ENCODE measurements at regions of chr12 and their contacts with region 1.

Region 1: GRCh38 chr12:42023733-42024494 is 120.8 kb downstream of the GXYLT1 start:
- DNase-seq: peak; percentile 24
- H3K4me3 ChIP-seq: peak overlapping the region; percentile 56
- H3K27ac ChIP-seq: no peak overlapping the region
- H3K27me3 ChIP-seq: no peaks in the 10 kb centered on the region
- CTCF ChIP-seq: peak; percentile 98

Region 2: DNA sequence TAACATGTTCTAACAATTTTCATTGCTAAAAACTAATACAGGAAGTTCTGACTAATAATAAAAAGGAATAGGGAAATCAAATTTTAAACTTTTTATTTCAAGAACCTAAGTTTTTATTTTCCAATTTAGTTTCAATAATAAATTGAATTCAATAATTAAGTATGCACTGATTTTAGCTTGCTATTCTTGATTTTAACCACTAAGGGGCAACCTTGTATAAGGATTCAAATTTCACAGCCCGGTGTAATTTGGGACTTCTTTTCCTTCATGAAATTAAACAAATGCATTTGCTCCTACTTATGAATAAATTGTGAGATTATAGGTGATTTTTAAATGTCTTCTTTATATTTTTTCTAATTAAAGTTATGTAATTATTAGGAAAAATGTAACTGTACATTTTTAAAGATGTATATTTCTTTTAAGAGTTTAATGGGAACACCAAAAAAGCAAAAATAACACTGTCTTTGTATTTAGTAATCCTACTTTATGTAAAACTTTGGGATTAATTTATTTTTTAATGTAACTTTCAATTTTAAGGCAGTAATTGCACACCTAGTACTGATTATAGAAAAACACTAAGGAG is 1077.2 kb before region 1 on chr12:
- CTCF ChIA-PET with region 1: interaction called, 59 read pairs
- POLR2A ChIA-PET with region 1: no interaction called
- DNase-seq: no peak
- H3K4me3 ChIP-seq: no peak overlapping the region
- H3K27ac ChIP-seq: no peak overlapping the region
- H3K27me3 ChIP-seq: no peaks in the 10 kb centered on the region
- CTCF ChIP-seq: peak; percentile 60

Region 3: DNA sequence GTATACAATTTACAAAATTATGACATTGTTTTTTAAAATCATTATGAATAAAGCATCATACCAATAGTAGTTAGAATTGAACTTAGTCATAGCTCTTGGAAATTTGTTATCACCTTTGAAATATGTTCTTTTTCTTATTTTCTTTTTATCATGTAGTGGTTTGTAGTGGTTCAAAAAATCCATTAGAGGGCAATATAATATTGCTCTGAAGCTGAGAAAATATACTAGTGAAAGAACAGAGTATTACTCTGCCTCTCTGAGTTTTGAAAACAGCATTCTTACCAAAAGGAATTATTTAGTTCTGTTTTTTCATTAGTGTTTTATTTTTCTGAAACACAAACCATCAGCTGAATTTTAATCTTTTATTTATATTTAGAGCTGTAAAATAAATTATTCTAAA is 759.6 kb before region 1 on chr12:
- CTCF ChIA-PET with region 1: interaction called, 32 read pairs
- POLR2A ChIA-PET with region 1: no interaction called
- DNase-seq: no peak
- H3K4me3 ChIP-seq: no peak overlapping the region
- H3K27ac ChIP-seq: no peak overlapping the region
- H3K27me3 ChIP-seq: no peaks in the 10 kb centered on the region
- CTCF ChIP-seq: peak; percentile 41

Region 4: DNA sequence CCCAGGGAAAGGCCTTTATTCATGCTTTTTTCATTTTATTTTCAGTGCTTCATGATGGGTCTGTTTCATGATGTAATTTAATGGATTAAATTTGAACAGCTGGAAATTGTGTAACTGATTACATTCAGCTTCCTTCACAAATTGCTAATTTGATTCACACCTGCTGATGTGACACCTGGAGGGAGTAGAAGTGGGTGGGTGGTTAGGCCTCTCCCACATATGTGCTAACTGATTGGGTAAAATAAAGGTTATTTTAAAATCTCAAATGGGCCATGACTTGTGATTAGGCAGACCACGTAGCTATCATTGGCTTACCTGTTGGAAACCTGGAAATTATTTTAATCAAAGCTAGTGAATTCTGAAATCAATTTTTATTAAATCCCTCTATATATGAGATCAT is 21.4 kb before region 1 on chr12:
- CTCF ChIA-PET with region 1: interaction called, 20 read pairs
- POLR2A ChIA-PET with region 1: no interaction called
- DNase-seq: no peak
- H3K4me3 ChIP-seq: no peak overlapping the region
- H3K27ac ChIP-seq: no peak overlapping the region
- H3K27me3 ChIP-seq: no peaks in the 10 kb centered on the region
- CTCF ChIP-seq: no peak

Region 5: GRCh38 chr12:42332301-42333285 is 308.7 kb after region 1 on chr12:
- CTCF ChIA-PET with region 1: interaction called, 20 read pairs
- POLR2A ChIA-PET with region 1: no interaction called
- DNase-seq: no peak
- H3K4me3 ChIP-seq: no peak overlapping the region
- H3K27ac ChIP-seq: no peak overlapping the region
- H3K27me3 ChIP-seq: no peaks in the 10 kb centered on the region
- CTCF ChIP-seq: peak; percentile 65

Measured in AG04450 (cell line).